Activated CD4-positive, alpha-beta T cell treated with anti-CD3 and anti-CD28 coated beads for 36 hours (primary cell): ENCODE measurements at regions of chr19 and their contacts with region 1.

Region 1: DNA sequence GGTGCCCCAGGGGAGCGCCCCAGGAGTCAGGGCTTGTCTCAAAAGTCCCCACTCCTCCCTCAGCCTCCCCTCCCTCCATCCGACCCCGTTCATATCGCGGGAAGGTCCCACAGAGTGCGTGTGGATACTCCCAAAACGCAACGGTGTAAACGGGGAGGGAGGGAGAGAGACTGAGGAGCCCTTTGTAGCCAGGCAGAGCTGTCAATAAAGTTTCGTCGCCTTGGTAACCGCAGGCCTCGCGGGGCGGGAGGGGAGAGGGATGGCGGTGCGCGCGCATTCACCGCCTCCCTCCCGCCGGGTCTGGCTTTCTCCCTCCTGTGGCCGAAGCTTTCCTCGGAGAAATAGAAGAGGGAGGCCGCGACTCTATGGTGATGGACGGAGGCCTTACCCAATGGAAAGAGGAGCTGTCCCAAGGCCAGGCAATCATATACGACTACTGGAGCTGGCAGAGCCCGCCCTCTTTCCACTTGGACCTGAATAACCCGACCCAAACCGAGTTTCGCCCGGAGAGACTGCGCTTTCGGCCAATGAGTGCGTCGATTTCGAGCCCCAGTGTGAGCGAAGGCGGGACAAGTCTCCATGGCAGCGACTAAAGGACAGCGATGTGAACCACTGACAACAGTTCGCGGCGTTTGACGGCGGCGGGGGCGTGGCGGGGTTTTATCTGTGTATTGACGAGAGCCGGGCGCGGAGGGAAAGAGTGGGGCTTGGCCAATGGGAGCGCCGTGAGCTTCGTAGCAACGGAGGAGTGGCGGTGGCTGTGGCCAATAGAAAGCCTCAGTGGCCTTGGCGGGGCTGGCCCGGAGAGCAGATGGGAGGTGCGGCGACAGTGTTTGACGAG is at the start of gene KMT5C:
- DNase-seq: peak; percentile 100
- ATAC-seq: peak; percentile 86
- H3K4me3 Mint-ChIP-seq: peak within 1 kb of the TSS; percentile 86
- H3K27ac Mint-ChIP-seq: peak within 1 kb of the TSS; percentile 97
- H3K4me1 Mint-ChIP-seq: peaks cover 18% of the 10 kb centered on the region
- H3K27me3 Mint-ChIP-seq: peaks cover 2% of the 10 kb centered on the region
- total RNA-seq, gene KMT5C: 27.5 to 32.3 TPM

Region 2: GRCh38 chr19:54189735-54190502 is 1149.3 kb before region 1 on chr19:
- CTCF ChIA-PET with region 1: no interaction called
- POLR2A ChIA-PET with region 1: no interaction called
- intact Hi-C with region 1: loop called in 1 of 2 experiments (anchors 1 kb)
- DNase-seq: peak; percentile 100
- ATAC-seq: peak; percentile 69
- H3K4me3 Mint-ChIP-seq: peak overlapping the region; percentile 76
- H3K27ac Mint-ChIP-seq: peak overlapping the region; percentile 96
- H3K4me1 Mint-ChIP-seq: peaks cover 34% of the 10 kb centered on the region
- H3K27me3 Mint-ChIP-seq: no peaks in the 10 kb centered on the region

Region 3: DNA sequence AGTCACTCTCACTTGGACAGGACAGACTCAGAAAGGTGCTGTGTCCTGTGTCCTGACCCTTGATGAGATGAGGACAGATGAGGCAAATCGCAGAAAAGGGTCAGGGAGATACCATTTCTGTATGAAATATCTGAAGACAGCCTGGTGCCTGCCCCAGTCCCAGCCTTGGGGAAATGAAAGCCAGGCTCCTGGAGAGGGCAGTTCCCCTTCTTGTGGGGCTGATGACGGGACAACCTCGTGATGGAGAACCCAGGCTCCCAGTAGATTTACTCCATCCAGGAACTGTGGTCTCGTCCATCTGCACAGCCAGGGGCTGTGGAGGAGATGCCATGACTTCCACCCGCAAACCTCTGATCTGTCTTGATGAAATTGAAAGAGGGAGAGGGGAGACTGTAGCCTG is 695.2 kb before region 1 on chr19:
- CTCF ChIA-PET with region 1: no interaction called
- POLR2A ChIA-PET with region 1: no interaction called
- intact Hi-C with region 1: no loop called
- DNase-seq: no peak
- ATAC-seq: no peak
- H3K4me3 Mint-ChIP-seq: no peak overlapping the region
- H3K27ac Mint-ChIP-seq: no peak overlapping the region
- H3K4me1 Mint-ChIP-seq: no peaks in the 10 kb centered on the region
- H3K27me3 Mint-ChIP-seq: peaks cover 19% of the 10 kb centered on the region

Region 4: GRCh38 chr19:55080968-55081772 is 258.1 kb before region 1 on chr19:
- CTCF ChIA-PET with region 1: no interaction called
- POLR2A ChIA-PET with region 1: no interaction called
- intact Hi-C with region 1: loop called in 1 of 2 experiments (anchors 1 kb)
- DNase-seq: peak; percentile 95
- ATAC-seq: peak; percentile 71
- H3K4me3 Mint-ChIP-seq: peak overlapping the region; percentile 69
- H3K27ac Mint-ChIP-seq: peak overlapping the region; percentile 31
- H3K4me1 Mint-ChIP-seq: peaks cover 22% of the 10 kb centered on the region
- H3K27me3 Mint-ChIP-seq: peaks cover 56% of the 10 kb centered on the region

Region 5: GRCh38 chr19:55279770-55280643 is 59.3 kb before region 1 on chr19 and contains the start of gene HSPBP1:
- CTCF ChIA-PET with region 1: no interaction called
- POLR2A ChIA-PET with region 1: no interaction called
- intact Hi-C with region 1: loop called (anchors 1 kb)
- DNase-seq: peak; percentile 98
- ATAC-seq: peak; percentile 92
- H3K4me3 Mint-ChIP-seq: peak within 1 kb of the TSS; percentile 100
- H3K27ac Mint-ChIP-seq: peak within 1 kb of the TSS; percentile 98
- H3K4me1 Mint-ChIP-seq: peaks cover 24% of the 10 kb centered on the region
- H3K27me3 Mint-ChIP-seq: no peaks in the 10 kb centered on the region
- total RNA-seq, gene HSPBP1: 41.1 to 45.2 TPM

Region 6: DNA sequence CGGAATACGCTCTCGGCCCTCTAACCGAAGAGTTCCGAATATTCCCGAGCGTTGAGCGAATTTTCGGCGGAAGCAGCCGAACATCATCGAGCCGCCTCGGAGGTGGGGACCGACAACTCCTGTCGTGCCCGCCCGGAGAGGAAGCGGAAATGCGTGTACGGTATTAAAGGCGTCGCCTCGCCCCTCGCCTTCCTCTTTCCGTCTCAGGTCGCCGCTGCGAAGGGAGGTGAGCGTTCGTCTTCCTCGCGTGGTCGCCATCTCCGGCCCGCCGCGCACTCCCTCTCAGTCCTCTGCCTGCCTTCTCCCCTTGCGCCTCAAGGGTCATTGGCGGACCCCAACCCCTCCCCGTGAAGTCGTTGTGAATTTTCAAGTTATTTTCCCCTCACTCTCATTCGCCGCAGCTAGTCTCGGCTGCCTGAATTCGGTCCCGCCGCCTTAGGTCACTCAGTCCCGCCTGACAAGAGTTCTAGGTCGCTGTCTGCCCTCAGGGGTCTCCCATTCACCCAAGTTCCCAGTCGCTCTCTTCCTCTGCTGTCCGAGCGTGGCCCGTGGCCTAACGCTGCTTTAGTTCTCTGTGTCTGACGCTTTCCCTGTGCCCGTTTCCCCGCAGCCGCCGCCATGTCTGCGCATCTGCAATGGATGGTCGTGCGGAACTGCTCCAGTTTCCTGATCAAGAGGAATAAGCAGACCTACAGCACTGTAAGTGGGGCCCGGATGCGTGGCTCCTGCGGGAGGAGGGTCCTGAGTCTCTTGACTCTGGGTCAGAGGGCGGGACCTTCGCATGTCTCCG is 46.7 kb after region 1 on chr19 and contains the start of gene RPL28:
- CTCF ChIA-PET with region 1: interaction called, 10 read pairs
- POLR2A ChIA-PET with region 1: interaction called, 9 read pairs
- intact Hi-C with region 1: loop called (anchors 1 kb)
- DNase-seq: peak; percentile 98
- ATAC-seq: peak; percentile 85
- H3K4me3 Mint-ChIP-seq: peak within 1 kb of the TSS; percentile 89
- H3K27ac Mint-ChIP-seq: peak within 1 kb of the TSS; percentile 98
- H3K4me1 Mint-ChIP-seq: peaks cover 51% of the 10 kb centered on the region
- H3K27me3 Mint-ChIP-seq: no peaks in the 10 kb centered on the region
- total RNA-seq, gene RPL28: 2,751 to 4,078 TPM

Region 7: DNA sequence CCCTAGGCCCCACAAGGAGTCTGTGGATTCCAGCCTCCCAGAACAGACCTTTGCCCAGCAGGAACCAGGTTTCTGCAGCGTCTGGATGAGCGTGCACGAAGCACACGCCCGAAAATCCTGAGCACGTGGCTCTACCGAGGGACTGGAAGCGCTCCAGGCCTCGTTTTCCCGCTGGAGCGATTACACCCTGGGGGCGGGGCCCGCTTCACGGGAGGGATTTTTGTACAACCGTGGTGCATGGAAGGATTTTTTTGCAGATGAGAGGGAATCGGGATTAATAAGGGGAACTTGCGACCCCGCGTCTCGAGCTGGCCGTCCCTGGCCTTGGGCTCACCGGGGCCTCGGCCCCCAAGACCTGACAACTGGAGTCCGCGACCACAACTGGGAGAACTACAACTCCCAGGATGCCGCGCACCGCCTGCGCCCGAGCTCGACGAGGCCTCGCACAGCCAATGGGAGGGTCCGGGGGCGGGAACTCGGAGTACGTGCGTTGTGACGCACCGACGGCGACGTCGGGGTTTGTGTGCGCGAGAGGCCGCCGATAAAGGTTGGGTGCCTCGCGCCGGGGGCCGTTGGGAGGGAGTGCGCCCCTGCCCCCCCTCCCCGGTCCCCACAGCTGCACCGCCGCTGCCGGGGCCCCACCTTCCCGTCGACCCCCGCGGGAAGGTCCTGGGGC is 137.0 kb after region 1 on chr19 and contains the start of gene ZNF628:
- CTCF ChIA-PET with region 1: no interaction called
- POLR2A ChIA-PET with region 1: no interaction called
- intact Hi-C with region 1: loop called in 1 of 2 experiments (anchors 1 kb)
- DNase-seq: peak; percentile 99
- ATAC-seq: peak; percentile 96
- H3K4me3 Mint-ChIP-seq: peak within 1 kb of the TSS; percentile 84
- H3K27ac Mint-ChIP-seq: peak within 1 kb of the TSS; percentile 88
- H3K4me1 Mint-ChIP-seq: peaks cover 32% of the 10 kb centered on the region
- H3K27me3 Mint-ChIP-seq: no peaks in the 10 kb centered on the region
- total RNA-seq, gene ZNF628: 5.6 to 6.8 TPM

Region 8: GRCh38 chr19:55643348-55644176 is 304.3 kb after region 1 on chr19 and contains the start of gene ZNF581:
- CTCF ChIA-PET with region 1: no interaction called
- POLR2A ChIA-PET with region 1: interaction called, 4 read pairs
- intact Hi-C with region 1: loop called in 1 of 2 experiments (anchors 5 kb)
- DNase-seq: peak; percentile 91
- ATAC-seq: peak; percentile 55
- H3K4me3 Mint-ChIP-seq: peak within 1 kb of the TSS; percentile 93
- H3K27ac Mint-ChIP-seq: peak within 1 kb of the TSS; percentile 99
- H3K4me1 Mint-ChIP-seq: peaks cover 44% of the 10 kb centered on the region
- H3K27me3 Mint-ChIP-seq: no peaks in the 10 kb centered on the region
- total RNA-seq, gene ZNF581: 18.9 to 26.9 TPM